ENCODE measurements at regions of chr20 and their contacts with region 1.

Region 1: DNA sequence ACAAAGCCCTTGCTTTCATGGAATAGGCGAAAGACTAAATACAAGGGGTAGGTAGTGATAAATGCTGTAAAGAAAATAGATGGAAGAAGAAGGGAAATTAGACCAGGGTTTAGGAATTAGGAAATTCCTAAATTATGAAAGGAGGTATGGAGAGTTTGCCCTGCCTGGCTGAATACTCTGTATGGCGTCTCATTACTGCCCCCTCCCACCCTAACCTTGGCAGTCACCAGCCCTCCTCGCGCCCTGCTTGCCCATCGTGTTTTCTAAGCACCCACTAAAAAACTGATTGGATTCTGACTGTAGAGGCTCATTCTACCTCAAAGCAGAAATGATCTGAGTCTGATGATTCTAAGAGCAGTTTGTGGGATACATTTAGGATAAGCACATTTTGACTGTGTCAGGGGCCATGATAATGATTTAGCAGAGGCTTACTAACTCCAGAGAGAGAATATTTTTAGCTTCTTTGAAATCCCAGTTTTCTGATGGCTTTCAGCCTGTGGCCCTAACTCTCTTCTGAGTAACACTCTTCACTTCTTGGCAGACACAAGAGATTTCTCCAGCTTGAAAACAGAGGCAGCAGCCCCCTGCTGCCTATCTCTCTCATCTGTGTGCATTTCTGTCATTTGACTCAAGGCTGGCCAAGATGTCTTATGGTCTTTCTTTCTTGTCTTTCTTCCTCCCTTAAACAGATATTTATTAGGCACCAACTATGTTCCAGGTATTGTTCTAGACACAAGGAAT is 1.4 kb upstream of the CHD6 start:
- DNase-seq: peak in 19 of 42 donors; percentile 3 to 46 (median 18)

Region 2: GRCh38 chr20:41030531-41031244 is 588.8 kb before region 1 on chr20:
- intact Hi-C with region 1: loop called (anchors 10 kb)
- DNase-seq: no peak

Region 3: DNA sequence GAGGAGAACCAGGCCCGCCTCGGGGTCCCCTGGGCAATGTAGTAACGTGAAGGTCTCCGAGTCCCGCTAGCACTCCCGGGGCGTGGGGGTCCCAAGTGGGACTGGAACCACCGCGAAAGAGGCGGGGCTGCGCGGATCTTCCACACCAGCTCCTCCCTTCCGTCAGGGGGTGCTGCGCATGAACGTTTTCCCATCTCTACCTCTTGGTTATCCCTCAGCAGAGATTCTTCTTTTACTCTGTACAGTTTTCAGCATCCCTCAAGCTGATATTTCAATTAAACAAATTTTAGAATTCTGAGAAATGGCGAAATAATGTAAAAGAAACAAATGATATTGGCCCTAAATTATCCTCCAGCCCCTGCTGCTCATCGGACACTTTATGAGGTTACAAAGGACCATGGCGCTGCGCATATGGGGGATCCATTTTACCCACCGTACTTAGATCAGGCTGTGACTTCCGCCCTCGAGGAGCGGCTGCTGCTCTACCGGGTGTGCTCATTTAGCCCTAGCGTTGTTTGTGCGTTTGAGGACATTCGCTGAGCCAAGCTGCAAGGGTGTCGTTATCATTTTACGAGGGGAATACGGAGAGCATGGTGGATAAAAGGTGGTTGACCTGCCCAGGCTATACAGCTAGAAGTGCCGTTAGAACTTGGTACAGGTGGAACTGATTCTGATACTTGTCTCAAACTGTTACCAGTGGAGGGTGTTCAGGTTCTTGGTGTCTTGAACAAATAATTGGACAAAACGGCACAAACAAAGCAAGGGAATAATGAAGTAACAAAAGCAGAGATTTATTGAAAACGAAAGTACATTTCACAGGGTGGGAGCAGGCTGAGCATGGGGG is 73.8 kb after region 1 on chr20:
- intact Hi-C with region 1: loop called (anchors 2 kb)
- DNase-seq: peak; percentile 70 to 94 (median 86)